HCT116 (cell line): ENCODE measurements at regions of chr7 and their contacts with region 1.

Region 1: DNA sequence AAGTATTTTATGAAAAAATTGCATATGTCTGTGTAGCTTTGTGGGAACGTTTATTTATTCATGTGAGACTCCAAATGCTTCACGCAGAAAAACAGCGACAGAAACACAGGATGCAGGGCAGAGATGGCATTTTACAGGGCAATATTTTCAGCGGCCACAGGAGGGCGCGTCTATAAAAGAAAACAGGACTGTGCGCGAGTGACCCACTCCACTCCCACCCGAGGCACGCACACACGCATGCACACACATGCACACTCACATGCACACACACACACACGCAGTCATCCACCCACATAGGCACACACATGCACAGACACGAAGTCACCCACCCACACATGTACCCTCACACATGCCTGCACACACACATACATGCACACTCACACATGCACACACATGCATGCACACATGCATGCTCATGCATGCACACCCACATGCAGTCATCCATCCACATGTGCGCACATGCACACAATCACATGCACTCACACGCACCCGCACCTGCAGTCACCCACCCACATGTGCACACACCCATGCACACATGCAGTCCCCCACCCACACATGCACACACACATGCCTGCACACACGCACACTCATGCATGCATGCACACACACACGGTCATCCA is 96.3 kb downstream of the DNAJB6 start:
- DNase-seq: no peak
- ATAC-seq: peak; percentile 78
- H3K4me3 ChIP-seq: peak overlapping the region; percentile 0 to 17; a peak in 1 of 4 replicates
- H3K27ac ChIP-seq: no peak overlapping the region
- H3K4me1 ChIP-seq: peaks cover 6 to 11% of the 10 kb centered on the region in 2 experiments; a peak in 3 of 4 replicates
- H3K27me3 ChIP-seq: no peaks in the 10 kb centered on the region
- CTCF ChIP-seq: peak; percentile 72 to 80 (median 75)
- POLR2A ChIP-seq: no peak
- RAD21 ChIP-seq: peak; percentile 89

Region 2: DNA sequence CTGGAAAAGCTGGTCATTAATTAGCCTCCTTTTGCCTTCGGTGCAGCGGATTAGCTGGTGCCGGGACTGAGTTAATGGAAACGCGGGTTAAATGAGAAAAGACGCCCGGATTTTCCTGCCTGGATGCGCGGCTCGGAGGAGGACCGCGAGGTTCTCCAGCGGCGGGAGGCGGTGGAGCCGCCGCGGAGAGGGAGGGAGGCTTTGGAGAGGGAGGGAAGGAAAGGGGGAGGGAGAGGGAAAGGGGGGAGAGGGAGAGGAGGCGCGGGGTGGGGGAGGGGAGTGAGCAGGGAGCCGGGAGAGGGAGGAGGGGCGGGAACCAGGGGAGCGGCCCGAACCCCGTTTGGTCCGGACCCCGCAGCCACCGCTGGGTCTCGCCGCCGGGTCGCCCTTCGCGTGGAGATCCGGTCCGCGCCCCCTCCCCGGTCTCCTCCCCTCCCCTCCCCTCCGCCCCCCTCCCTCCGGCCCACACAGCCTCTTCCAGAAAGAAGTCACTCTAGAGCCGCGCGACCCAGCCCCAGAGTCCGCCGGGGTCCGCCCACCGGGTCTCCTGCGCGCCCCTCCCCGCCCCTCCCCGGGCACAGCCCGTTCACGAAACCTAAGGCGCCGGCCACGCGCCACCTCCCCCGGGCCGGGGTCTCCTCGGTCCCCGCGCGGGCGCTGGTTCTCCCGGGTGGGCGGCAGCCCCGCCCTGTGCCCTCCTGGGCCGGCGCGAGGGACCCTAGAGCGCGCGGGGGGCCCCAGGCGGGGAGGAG is 251.3 kb after region 1 on chr7:
- CTCF ChIA-PET with region 1: no interaction called
- POLR2A ChIA-PET with region 1: no interaction called
- RAD21 ChIA-PET with region 1: no interaction called
- intact Hi-C with region 1: loop called (anchors 10 kb)
- DNase-seq: no peak
- ATAC-seq: no peak
- H3K4me3 ChIP-seq: no peak overlapping the region
- H3K27ac ChIP-seq: no peak overlapping the region
- H3K4me1 ChIP-seq: peaks cover 0 to 5% of the 10 kb centered on the region in 2 experiments; a peak in 3 of 4 replicates
- H3K27me3 ChIP-seq: no peaks in the 10 kb centered on the region
- CTCF ChIP-seq: no peak
- POLR2A ChIP-seq: no peak
- RAD21 ChIP-seq: no peak

Region 3: DNA sequence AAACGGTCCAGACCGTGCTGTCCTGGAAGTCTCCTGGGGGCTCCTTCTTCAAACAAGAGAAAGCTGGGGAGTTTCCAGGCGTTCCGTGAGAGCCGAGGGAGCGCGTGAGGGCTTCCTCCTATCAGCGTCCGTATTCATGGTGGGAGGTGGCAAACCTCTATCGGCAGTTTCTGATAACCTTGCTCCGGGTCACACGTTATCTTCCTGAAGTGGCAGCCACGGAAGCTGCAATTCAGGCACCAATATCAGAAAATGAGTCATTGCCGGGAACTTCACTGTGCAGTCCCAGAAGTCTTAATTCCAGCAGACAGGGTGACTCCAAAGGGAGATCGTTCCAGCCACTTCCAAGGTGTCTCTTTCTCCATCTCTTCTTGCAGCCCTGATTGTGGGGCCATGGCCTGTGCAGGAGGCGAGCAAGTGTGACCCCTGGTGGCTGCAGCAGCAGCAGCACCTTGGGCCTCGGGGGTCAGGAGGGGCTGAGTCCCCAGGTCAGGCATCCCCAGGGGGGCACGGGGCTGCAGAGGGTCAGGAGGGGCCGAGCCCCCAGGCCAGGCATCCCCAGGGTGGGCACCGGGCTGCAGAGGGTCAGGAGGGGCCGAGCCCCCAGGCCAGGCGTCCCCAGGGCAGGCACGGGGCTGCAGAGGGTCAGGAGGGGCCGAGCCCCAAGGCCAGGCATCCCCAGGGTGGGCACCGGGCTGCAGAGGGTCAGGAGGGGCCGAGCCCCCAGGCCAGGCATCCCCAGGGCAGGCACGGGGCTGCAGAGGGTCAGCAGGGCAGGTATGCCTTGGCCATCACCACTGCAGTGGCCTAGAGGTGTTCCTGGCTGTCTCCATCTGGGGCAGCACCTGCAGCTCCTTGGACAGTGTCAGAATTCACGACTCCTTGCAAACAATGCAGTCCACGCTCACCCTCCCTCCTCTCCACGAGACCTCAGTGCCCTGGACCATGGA is 442.4 kb after region 1 on chr7:
- CTCF ChIA-PET with region 1: no interaction called
- POLR2A ChIA-PET with region 1: no interaction called
- RAD21 ChIA-PET with region 1: no interaction called
- intact Hi-C with region 1: loop called (anchors 1 kb)
- DNase-seq: peak; percentile 23
- ATAC-seq: peak; percentile 95
- H3K4me3 ChIP-seq: peak overlapping the region in 1 of 2 experiments; percentile 18; a peak in 1 of 4 replicates
- H3K27ac ChIP-seq: no peak overlapping the region
- H3K4me1 ChIP-seq: peaks cover 0 to 9% of the 10 kb centered on the region in 2 experiments; a peak in 2 of 4 replicates
- H3K27me3 ChIP-seq: no peaks in the 10 kb centered on the region
- CTCF ChIP-seq: peak; percentile 67 to 85 (median 84); a peak in 5 of 6 replicates
- POLR2A ChIP-seq: no peak
- RAD21 ChIP-seq: peak; percentile 90

Region 4: DNA sequence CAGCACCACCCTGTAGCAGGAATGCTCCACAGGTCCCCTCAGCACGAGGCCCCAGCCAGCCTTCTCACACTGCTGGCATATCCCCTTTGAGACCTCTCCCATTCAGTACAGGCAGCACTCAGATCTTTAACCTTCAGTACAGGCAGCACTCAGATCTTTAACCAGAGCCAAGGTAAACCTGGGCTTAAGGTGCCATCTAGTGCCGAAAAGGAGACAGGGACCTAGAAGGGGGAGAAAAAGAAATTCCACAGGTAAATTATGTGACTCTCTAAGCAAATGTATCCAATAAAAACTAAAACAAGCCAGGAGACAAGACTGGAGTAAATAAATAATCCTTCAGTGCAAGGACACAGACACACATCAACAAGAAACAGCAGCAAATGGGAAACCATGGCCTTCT is 795.9 kb after region 1 on chr7:
- CTCF ChIA-PET with region 1: no interaction called
- POLR2A ChIA-PET with region 1: no interaction called
- RAD21 ChIA-PET with region 1: no interaction called
- intact Hi-C with region 1: loop called (anchors 2 kb)
- DNase-seq: peak; percentile 13
- ATAC-seq: peak; percentile 58
- H3K4me3 ChIP-seq: no peak overlapping the region
- H3K27ac ChIP-seq: no peak overlapping the region
- H3K4me1 ChIP-seq: no peaks in the 10 kb centered on the region
- H3K27me3 ChIP-seq: no peaks in the 10 kb centered on the region
- CTCF ChIP-seq: peak; percentile 25 to 49 (median 47); a peak in 4 of 6 replicates
- POLR2A ChIP-seq: no peak
- RAD21 ChIP-seq: peak; percentile 79